SK-N-SH (cell line): ENCODE measurements at regions of chr4 and their contacts with region 1.

Region 1: DNA sequence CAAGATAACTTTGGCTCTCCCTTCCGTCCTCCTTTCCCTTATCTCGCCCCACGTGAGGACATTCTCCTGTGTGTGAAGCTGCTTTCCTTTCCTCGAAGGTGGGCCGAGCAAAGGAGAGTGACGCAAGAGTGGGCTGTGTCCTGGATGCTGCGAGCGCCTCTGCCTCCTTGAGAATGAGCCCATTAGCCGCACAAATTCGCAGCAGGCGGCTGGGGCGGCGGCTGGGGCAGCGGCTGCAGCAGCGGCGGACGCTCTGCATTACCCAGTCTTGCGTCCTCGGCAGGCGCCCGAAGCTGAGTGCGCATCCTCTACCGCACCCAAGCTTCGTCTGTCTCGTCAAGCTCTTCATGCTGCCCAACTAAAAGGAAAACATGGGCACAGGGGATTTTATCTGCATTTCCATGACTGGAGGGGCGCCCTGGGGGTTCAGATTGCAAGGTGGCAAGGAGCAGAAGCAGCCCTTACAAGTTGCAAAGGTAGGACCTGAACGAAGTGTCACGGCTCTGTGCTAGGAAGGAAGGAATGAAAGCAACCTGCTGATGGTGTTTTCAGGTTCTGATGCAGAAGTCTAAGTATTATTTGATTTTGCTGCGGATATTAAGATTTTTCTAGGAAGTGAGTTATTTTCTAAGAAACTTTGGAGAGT is at the start of gene SYNPO2:
- DNase-seq: peak; percentile 78
- H3K4me3 ChIP-seq: peak within 1 kb of the TSS; percentile 75 to 91
- H3K27ac ChIP-seq: peak within 1 kb of the TSS; percentile 72 to 89
- H3K4me1 ChIP-seq: peaks cover 0 to 13% of the 10 kb centered on the region in 2 experiments; a peak in 2 of 4 replicates
- H3K27me3 ChIP-seq: no peaks in the 10 kb centered on the region
- CTCF ChIP-seq: no peak
- EP300 ChIP-seq: no peak
- RAD21 ChIP-seq: peak; percentile 8; the same call in 1 of the 2 replicates
- polyA plus RNA-seq, gene SYNPO2: 7.2 and 10.8 TPM in 2 replicates

Region 2: GRCh38 chr4:118746292-118746919 is 142.4 kb before region 1 on chr4:
- CTCF ChIA-PET with region 1: interaction called, 31 read pairs
- POLR2A ChIA-PET with region 1: interaction called, 4 read pairs
- DNase-seq: no peak
- H3K4me3 ChIP-seq: no peak overlapping the region
- H3K27ac ChIP-seq: peak overlapping the region in 1 of 2 experiments; percentile 70; a peak in 2 of 4 replicates
- H3K4me1 ChIP-seq: peaks cover 3 to 22% of the 10 kb centered on the region in 2 experiments; a peak in 2 of 4 replicates
- H3K27me3 ChIP-seq: no peaks in the 10 kb centered on the region
- CTCF ChIP-seq: no peak
- EP300 ChIP-seq: no peak
- RAD21 ChIP-seq: no peak

Region 3: GRCh38 chr4:118835571-118836300 is 53.1 kb before region 1 on chr4 and contains the start of gene SEC24D:
- CTCF ChIA-PET with region 1: interaction called, 25 read pairs
- POLR2A ChIA-PET with region 1: interaction called, 8 read pairs
- DNase-seq: peak; percentile 99
- H3K4me3 ChIP-seq: peak within 1 kb of the TSS; percentile 84 to 96
- H3K27ac ChIP-seq: peak within 1 kb of the TSS; percentile 90 to 95
- H3K4me1 ChIP-seq: peaks cover 8 to 24% of the 10 kb centered on the region in 2 experiments; a peak in 3 of 4 replicates
- H3K27me3 ChIP-seq: no peaks in the 10 kb centered on the region
- CTCF ChIP-seq: 0 out of 2 replicates have a peak, but pooled peaks have one; percentile 6
- EP300 ChIP-seq: no peak
- RAD21 ChIP-seq: no peak
- polyA plus RNA-seq, gene SEC24D: 30.4 and 32.2 TPM in 2 replicates

Region 4: DNA sequence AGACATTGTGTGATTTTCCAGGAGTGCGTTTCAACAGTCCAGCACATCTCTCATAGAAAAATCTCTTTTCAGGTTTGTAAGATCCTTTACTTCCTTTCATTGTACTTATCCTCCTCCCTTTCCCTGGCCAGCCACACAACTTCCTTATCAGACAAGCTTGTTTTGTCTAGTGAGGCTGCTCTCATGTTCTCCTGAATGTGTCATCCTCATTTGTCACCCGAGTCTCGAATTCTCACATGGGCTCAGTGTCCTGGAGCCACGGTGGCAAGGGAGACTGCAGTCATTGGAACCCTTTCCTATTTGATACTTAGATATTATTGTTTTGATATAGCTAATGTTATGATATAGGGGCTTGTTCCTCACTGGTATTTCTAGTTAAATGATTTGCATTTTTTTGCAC is 16.8 kb after region 1 on chr4:
- CTCF ChIA-PET with region 1: interaction called, 20 read pairs
- POLR2A ChIA-PET with region 1: interaction called, 5 read pairs
- DNase-seq: no peak
- H3K4me3 ChIP-seq: peak overlapping the region in 1 of 2 experiments; percentile 0; a peak in 1 of 4 replicates
- H3K27ac ChIP-seq: peak overlapping the region; percentile 59 to 91
- H3K4me1 ChIP-seq: peaks cover 15 to 64% of the 10 kb centered on the region in 2 experiments; a peak in 2 of 4 replicates
- H3K27me3 ChIP-seq: no peaks in the 10 kb centered on the region
- CTCF ChIP-seq: no peak
- EP300 ChIP-seq: no peak
- RAD21 ChIP-seq: no peak

Region 5: DNA sequence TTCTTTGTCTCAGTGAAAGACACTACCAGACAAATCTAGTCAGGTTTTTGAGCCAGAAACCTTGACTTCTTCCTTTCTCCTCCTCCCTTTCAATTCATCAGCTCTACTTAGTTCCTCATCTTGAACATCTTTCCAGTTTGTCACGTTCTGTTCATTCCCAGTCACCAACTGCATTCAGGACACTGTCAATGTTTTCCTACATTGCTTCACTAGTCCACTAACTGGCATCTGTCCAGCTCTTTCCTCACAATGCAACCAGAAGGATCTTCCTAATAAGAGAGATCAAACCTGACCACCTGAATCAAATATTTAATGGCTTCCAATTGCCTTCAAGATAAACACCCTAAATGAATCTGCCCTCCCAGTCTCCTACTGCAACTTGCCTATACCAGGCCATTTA is 52.4 kb after region 1 on chr4:
- CTCF ChIA-PET with region 1: interaction called, 14 read pairs
- POLR2A ChIA-PET with region 1: no interaction called
- DNase-seq: no peak
- H3K4me3 ChIP-seq: no peak overlapping the region
- H3K27ac ChIP-seq: peak overlapping the region in 1 of 2 experiments; percentile 41; a peak in 2 of 4 replicates
- H3K4me1 ChIP-seq: peaks cover 7 to 26% of the 10 kb centered on the region in 2 experiments; a peak in 3 of 4 replicates
- H3K27me3 ChIP-seq: no peaks in the 10 kb centered on the region
- CTCF ChIP-seq: no peak
- EP300 ChIP-seq: no peak
- RAD21 ChIP-seq: no peak

Region 6: DNA sequence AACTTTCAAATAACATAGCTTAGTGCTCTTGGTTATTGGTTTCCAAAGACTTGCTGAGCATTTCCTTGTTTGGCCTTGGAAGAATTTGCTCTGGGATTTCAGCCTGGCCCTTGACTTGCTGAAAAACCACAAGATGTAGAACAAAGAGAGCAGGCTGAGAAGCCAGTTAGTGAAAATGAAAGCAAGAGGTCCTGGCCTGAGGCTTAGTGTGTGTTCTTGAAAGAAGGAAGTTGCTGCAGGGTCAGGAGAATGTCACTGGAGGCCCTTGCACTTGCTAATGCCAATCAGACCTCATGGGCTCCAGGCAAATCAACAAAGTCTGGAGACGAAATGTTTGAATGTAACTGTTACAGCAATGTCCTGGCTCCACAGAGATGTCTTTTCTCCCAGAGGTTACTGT is 79.2 kb after region 1 on chr4:
- CTCF ChIA-PET with region 1: interaction called, 111 read pairs
- POLR2A ChIA-PET with region 1: interaction called, 5 read pairs
- DNase-seq: no peak
- H3K4me3 ChIP-seq: peak overlapping the region in 1 of 2 experiments; percentile 2; a peak in 1 of 4 replicates
- H3K27ac ChIP-seq: peak overlapping the region; percentile 70 to 91
- H3K4me1 ChIP-seq: peaks cover 13 to 34% of the 10 kb centered on the region in 2 experiments
- H3K27me3 ChIP-seq: no peaks in the 10 kb centered on the region
- CTCF ChIP-seq: no peak
- EP300 ChIP-seq: no peak
- RAD21 ChIP-seq: no peak

Region 7: GRCh38 chr4:119268451-119268850 is 379.7 kb after region 1 on chr4:
- CTCF ChIA-PET with region 1: no interaction called
- POLR2A ChIA-PET with region 1: no interaction called
- DNase-seq: peak; percentile 26
- H3K4me3 ChIP-seq: no peak overlapping the region
- H3K27ac ChIP-seq: no peak overlapping the region; a peak in 1 of 4 replicates
- H3K4me1 ChIP-seq: peaks cover 0 to 2% of the 10 kb centered on the region in 2 experiments; a peak in 1 of 4 replicates
- H3K27me3 ChIP-seq: no peaks in the 10 kb centered on the region
- CTCF ChIP-seq: no peak
- EP300 ChIP-seq: no peak
- RAD21 ChIP-seq: no peak